Posterior vena cava (tissue), 2 donors: ENCODE measurements at regions of chrX and their contacts with region 1.

Region 1: GRCh38 chrX:112800971-112801714 is 39.5 kb downstream of the AMOT start:
- DNase-seq: no peak

Region 2: GRCh38 chrX:112759512-112759911 is 41.6 kb before region 1 on chrX:
- intact Hi-C with region 1: loop called in 1 of 2 experiments (anchors 2 kb)
- DNase-seq: no peak